ENCODE measurements at regions of chr6 and their contacts with region 1.

Region 1: GRCh38 chr6:30678964-30679726 is 6.3 kb upstream of the DHX16 start:
- DNase-seq: peak; percentile 84 to 98 (median 92)
- ATAC-seq: peak; percentile 51 to 54
- H3K4me3 Mint-ChIP-seq: peak overlapping the region; percentile 94 to 100 (median 99)
- H3K27ac Mint-ChIP-seq: peak overlapping the region; percentile 77 to 99 (median 98)
- H3K4me1 Mint-ChIP-seq: peaks cover 21 to 60% (median 47%) of the 10 kb centered on the region in 4 donors
- H3K27me3 Mint-ChIP-seq: no peaks in the 10 kb centered on the region

Region 2: GRCh38 chr6:30515932-30516753 is 163.0 kb before region 1 on chr6:
- POLR2A ChIA-PET with region 1: interaction called, 11 read pairs
- DNase-seq: peak; percentile 71 to 97 (median 91)
- ATAC-seq: peak; percentile 84 to 85
- H3K4me3 Mint-ChIP-seq: peak overlapping the region; percentile 70 to 94 (median 90)
- H3K27ac Mint-ChIP-seq: peak overlapping the region; percentile 96 to 100 (median 99)
- H3K4me1 Mint-ChIP-seq: peaks cover 18 to 80% (median 66%) of the 10 kb centered on the region in 4 donors
- H3K27me3 Mint-ChIP-seq: no peaks in the 10 kb centered on the region

Region 3: DNA sequence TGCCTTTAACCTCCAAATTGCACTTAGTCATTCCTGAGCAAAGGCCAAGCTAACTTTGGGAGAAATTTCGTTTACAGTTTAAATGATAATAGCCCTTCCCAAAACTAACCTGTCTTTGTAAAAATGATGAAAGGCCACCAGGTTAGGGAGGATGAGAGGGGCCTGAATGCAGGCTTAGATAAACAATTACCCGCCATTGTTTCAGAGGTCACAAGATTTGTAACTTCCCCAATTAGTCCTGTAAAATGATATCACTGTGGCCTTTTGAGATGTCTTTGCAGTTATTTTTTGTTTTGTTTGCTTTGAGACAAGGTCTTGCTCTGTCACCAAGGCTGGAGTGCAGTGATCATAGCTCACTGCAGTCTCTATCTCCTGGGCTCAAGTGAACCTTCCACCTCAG is 149.1 kb before region 1 on chr6:
- POLR2A ChIA-PET with region 1: no interaction called
- DNase-seq: no peak
- ATAC-seq: no peak
- H3K4me3 Mint-ChIP-seq: no peak overlapping the region
- H3K27ac Mint-ChIP-seq: peak overlapping the region in 6 of 10 donors; percentile 32 to 83 (median 80)
- H3K4me1 Mint-ChIP-seq: peaks cover 9 to 62% (median 32%) of the 10 kb centered on the region in 4 donors
- H3K27me3 Mint-ChIP-seq: no peaks in the 10 kb centered on the region

Region 4: GRCh38 chr6:30730601-30731435 is 51.7 kb after region 1 on chr6:
- POLR2A ChIA-PET with region 1: interaction called, 51 read pairs
- DNase-seq: peak; percentile 66 to 90 (median 80)
- ATAC-seq: peak; percentile 98 to 99
- H3K4me3 Mint-ChIP-seq: peak overlapping the region; percentile 14 to 77 (median 51)
- H3K27ac Mint-ChIP-seq: peak overlapping the region; percentile 47 to 81 (median 70)
- H3K4me1 Mint-ChIP-seq: peaks cover 21 to 47% (median 31%) of the 10 kb centered on the region in 4 donors
- H3K27me3 Mint-ChIP-seq: no peaks in the 10 kb centered on the region

Measured in naive thymus-derived CD8-positive, alpha-beta T cell (primary cell).